Heart left ventricle (tissue), 16 donors: ENCODE measurements at regions of chr13 and their contacts with region 1.

Region 1: GRCh38 chr13:47774671-47774994 is 226.4 kb downstream of the SUCLA2 start:
- DNase-seq: no peak
- ATAC-seq: no peak
- H3K4me3 ChIP-seq: no peak overlapping the region
- H3K27ac ChIP-seq: no peak overlapping the region
- H3K4me1 ChIP-seq: no peaks in the 10 kb centered on the region
- H3K27me3 ChIP-seq: no peaks in the 10 kb centered on the region
- CTCF ChIP-seq: no peak
- POLR2A ChIP-seq: no peak

Region 2: DNA sequence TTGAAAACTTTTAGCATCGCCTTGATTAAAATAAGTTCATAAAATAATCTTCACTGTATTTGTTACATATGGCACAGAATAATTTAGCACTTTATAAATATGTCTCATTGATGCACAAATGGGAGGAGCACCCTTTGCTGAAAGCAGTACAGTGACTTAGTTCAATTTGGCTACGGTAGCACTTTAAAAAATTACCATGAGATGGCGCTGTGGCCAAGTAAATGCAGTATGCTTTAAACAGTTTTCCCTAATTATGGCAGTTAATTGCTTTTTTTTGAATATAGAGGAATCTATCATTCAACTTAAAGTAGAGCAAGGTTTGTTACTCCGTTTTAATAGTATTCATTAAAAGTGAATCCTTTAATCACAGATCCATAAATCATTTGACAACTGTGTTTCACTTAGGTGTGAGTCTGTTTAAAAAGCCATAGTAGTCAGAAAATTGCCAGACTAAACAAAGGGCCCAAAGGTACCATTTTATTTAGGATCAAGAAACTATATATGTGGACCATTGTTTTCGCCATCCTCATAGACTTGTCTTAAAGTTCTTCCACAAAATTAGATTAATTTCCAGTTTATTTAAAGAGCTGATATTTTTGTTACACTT is 942.9 kb before region 1 on chr13:
- intact Hi-C with region 1: loop called (anchors 5 to 10 kb)
- DNase-seq: no peak
- ATAC-seq: peak in 1 of 4 donors; percentile 36
- H3K4me3 ChIP-seq: no peak overlapping the region
- H3K27ac ChIP-seq: no peak overlapping the region
- H3K4me1 ChIP-seq: no peaks in the 10 kb centered on the region
- H3K27me3 ChIP-seq: no peaks in the 10 kb centered on the region
- CTCF ChIP-seq: peak; percentile 55 to 86 (median 74)
- POLR2A ChIP-seq: no peak

Region 3: GRCh38 chr13:46964789-46965527 is 809.7 kb before region 1 on chr13:
- intact Hi-C with region 1: loop called in 5 of 10 experiments (anchors 5 to 10 kb)
- DNase-seq: no peak
- ATAC-seq: no peak
- H3K4me3 ChIP-seq: no peak overlapping the region
- H3K27ac ChIP-seq: no peak overlapping the region
- H3K4me1 ChIP-seq: no peaks in the 10 kb centered on the region
- H3K27me3 ChIP-seq: no peaks in the 10 kb centered on the region
- CTCF ChIP-seq: no peak
- POLR2A ChIP-seq: no peak

Region 4: DNA sequence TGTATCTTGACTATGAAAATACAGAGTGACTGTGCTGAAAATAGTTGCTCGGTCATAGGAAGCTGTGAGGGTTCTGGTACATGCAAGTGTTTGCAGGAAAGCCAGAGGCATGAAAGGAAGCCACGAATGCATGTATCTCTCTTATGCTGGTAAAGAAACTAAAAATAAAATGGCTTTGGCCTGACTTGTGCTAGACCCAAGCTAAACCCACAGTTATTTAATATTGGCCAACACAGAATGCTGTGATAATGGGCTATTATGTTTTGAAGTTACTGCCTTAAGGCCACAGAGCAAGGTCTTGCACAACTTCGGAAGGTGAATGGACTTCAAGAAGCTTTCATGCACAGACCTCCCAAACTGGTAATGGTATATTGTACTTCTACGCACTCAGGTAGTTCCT is 359.6 kb before region 1 on chr13:
- intact Hi-C with region 1: loop called in 8 of 10 experiments (anchors 5 to 10 kb)
- DNase-seq: no peak
- ATAC-seq: no peak
- H3K4me3 ChIP-seq: no peak overlapping the region
- H3K27ac ChIP-seq: no peak overlapping the region
- H3K4me1 ChIP-seq: no peaks in the 10 kb centered on the region
- H3K27me3 ChIP-seq: no peaks in the 10 kb centered on the region
- CTCF ChIP-seq: no peak
- POLR2A ChIP-seq: no peak

Region 5: GRCh38 chr13:47426126-47426849 is 348.3 kb before region 1 on chr13:
- intact Hi-C with region 1: loop called in 4 of 10 experiments (anchors 5 to 10 kb)
- DNase-seq: peak; percentile 28 to 52 (median 46)
- ATAC-seq: peak; percentile 82 to 90 (median 88)
- H3K4me3 ChIP-seq: no peak overlapping the region
- H3K27ac ChIP-seq: no peak overlapping the region
- H3K4me1 ChIP-seq: peaks cover 0 to 7% (median 0%) of the 10 kb centered on the region in 12 donors
- H3K27me3 ChIP-seq: no peaks in the 10 kb centered on the region
- CTCF ChIP-seq: no peak
- POLR2A ChIP-seq: no peak

Region 6: DNA sequence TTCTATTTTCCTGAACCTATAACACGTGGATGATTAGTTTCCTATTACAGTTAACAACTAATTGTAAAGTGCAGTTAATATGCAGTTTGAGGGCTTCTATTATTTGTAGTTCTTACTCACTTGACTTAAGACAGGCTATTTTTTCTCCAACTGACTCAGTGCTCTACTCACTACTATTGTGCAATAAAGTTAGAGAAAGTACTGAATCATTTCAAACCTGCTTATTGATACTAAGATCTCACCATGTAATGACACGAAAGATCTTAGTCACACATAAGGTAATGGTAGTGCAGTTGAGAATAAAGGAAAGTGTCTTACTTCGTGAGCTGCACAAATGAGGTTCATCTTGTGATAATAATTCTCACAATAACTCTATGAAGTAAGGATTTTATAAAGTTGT is 435.5 kb after region 1 on chr13:
- intact Hi-C with region 1: no loop called
- DNase-seq: no peak
- ATAC-seq: no peak
- H3K4me3 ChIP-seq: no peak overlapping the region
- H3K27ac ChIP-seq: no peak overlapping the region
- H3K4me1 ChIP-seq: peaks cover 0 to 8% (median 0%) of the 10 kb centered on the region in 12 donors
- H3K27me3 ChIP-seq: no peaks in the 10 kb centered on the region
- CTCF ChIP-seq: no peak
- POLR2A ChIP-seq: no peak